ENCODE measurements at regions of chr20 and their contacts with region 1.

Region 1: GRCh38 chr20:40990542-40991120 is 38.0 kb upstream of the TOP1 start:
- DNase-seq: peak; percentile 92
- H3K4me3 ChIP-seq: peak overlapping the region; percentile 51
- H3K27ac ChIP-seq: peak overlapping the region; percentile 98
- H3K4me1 ChIP-seq: peaks cover 98% of the 10 kb centered on the region
- CTCF ChIP-seq: peak; percentile 90

Region 2: DNA sequence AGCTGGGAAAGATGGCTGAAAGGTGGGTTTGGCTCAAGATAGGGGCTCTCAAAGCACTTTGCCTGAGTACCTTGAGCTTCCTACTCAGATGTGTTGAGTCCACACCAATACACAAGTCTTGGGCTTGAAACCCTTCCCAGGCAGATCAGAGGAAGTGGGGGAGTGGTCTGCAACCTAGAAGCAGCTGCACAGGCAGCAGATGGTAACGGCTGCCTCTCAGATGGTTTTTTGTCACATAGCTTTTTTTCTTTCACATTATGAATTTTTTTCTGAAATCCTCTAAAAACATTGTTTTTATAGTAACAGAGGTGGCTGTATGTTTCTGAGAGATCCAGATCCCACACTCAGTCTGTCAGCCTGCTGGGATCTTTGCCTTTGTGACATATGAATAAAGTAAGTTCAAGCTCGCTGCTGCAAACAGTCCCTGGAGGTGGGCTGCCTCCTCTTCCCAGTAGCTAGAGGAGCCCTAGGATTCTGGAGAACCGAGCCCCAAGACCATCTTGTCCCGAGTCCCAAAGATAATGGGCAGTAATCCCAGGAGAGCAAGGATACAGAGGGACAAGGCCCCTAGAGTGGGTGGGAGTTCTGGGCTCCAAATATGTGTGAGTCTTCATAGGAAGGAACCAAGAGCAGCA is 59.1 kb before region 1 on chr20:
- CTCF ChIA-PET with region 1: interaction called, 4 read pairs
- POLR2A ChIA-PET with region 1: interaction called, 5 read pairs
- intact Hi-C with region 1: loop called (anchors 5 kb)
- DNase-seq: peak; percentile 92
- H3K4me3 ChIP-seq: peak overlapping the region; percentile 34
- H3K27ac ChIP-seq: peak overlapping the region; percentile 96
- H3K4me1 ChIP-seq: peaks cover 83% of the 10 kb centered on the region
- CTCF ChIP-seq: no peak

Region 3: GRCh38 chr20:41003143-41003883 is 12.7 kb after region 1 on chr20:
- CTCF ChIA-PET with region 1: interaction called, 56 read pairs
- POLR2A ChIA-PET with region 1: interaction called, 302 read pairs
- intact Hi-C with region 1: no loop called
- DNase-seq: no peak
- H3K4me3 ChIP-seq: no peak overlapping the region
- H3K27ac ChIP-seq: peak overlapping the region; percentile 68
- H3K4me1 ChIP-seq: peaks cover 75% of the 10 kb centered on the region
- CTCF ChIP-seq: no peak

Region 4: GRCh38 chr20:41028348-41029148 is 37.9 kb after region 1 on chr20 and contains the start of gene TOP1:
- CTCF ChIA-PET with region 1: interaction called, 15 read pairs
- POLR2A ChIA-PET with region 1: interaction called, 88 read pairs
- intact Hi-C with region 1: loop called (anchors 1 kb)
- DNase-seq: peak; percentile 100
- H3K4me3 ChIP-seq: peak within 1 kb of the TSS; percentile 88
- H3K27ac ChIP-seq: peak within 1 kb of the TSS; percentile 54
- H3K4me1 ChIP-seq: peaks cover 61% of the 10 kb centered on the region
- CTCF ChIP-seq: no peak
- total RNA-seq, gene TOP1: 44.6 and 53.0 TPM in 2 replicates

Region 5: GRCh38 chr20:41063438-41063837 is 72.8 kb after region 1 on chr20:
- CTCF ChIA-PET with region 1: interaction called, 4 read pairs
- POLR2A ChIA-PET with region 1: interaction called, 7 read pairs
- intact Hi-C with region 1: loop called (anchors 2 kb)
- DNase-seq: peak; percentile 26
- H3K4me3 ChIP-seq: no peak overlapping the region
- H3K27ac ChIP-seq: no peak overlapping the region
- H3K4me1 ChIP-seq: peaks cover 43% of the 10 kb centered on the region
- CTCF ChIP-seq: no peak; the same call in 1 of the 2 replicates

Region 6: DNA sequence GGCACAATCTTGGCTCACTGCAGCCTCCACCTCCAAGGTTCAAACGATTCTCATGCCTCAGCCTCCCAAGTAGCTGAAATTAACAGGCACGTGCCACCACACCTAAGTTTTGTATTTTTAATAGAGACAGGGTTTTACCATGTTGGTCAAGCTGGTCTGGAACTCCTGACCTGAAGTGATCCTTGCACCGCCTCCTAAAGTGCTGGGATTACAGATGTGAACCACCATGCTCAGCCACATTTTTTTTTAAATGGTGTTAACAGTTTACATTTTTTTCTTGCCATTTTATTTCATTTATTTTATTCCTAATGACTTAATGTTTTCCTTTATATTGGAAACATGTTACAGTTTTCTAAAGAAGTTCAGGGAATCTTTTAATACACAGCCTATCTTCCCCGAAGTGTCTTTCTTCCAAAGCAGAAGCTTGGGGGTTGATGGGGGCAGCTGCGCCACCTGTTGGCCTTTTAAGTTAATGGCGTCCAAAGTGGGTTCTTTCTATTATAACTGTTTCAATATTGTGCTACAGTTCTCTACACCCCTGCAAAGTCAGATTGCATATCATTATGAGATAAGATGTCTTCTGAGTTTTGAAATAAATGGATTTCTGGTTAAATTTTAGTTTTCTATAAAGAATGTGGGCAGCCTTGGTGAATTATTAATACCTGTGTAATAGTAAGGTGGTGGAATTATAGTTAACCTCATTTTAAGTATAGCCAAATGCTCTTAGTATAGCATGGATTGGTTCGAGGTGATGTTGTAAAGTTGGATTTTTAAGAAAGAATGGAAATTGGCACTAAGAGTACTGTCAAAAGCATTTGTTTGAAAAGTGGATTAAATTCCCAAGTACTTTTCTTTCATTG is 104.7 kb after region 1 on chr20:
- CTCF ChIA-PET with region 1: interaction called, 18 read pairs
- POLR2A ChIA-PET with region 1: interaction called, 10 read pairs
- intact Hi-C with region 1: loop called (anchors 1 kb)
- DNase-seq: peak; percentile 69
- H3K4me3 ChIP-seq: no peak overlapping the region
- H3K27ac ChIP-seq: no peak overlapping the region
- H3K4me1 ChIP-seq: no peaks in the 10 kb centered on the region
- CTCF ChIP-seq: peak; percentile 100

Region 7: GRCh38 chr20:41329435-41330342 is 339.1 kb after region 1 on chr20:
- CTCF ChIA-PET with region 1: no interaction called
- POLR2A ChIA-PET with region 1: no interaction called
- intact Hi-C with region 1: no loop called
- DNase-seq: no peak
- H3K4me3 ChIP-seq: no peak overlapping the region
- H3K27ac ChIP-seq: no peak overlapping the region
- H3K4me1 ChIP-seq: no peaks in the 10 kb centered on the region
- CTCF ChIP-seq: no peak